ENCODE measurements at regions of chr1 and their contacts with region 1.

Region 1: DNA sequence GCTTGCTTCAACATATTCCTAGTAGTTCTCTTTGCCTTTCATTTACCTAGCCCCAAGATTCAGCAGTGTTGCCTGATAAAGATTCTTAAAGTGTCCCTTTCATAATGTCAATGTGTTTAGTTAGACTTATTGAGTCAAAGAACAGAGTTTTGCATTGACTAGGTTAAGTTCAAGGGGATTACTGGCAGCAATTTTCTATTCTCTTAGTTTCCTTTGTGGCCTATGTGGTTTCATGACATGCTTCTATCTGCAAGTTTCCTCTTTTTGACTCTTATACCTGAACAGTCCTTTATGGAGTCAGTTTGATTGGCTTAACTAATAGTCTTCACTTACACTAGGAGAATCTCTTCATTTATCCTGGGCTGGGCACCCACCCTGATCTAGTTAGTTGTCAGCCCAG is 151.3 kb downstream of the ADGRL4 start:
- ATAC-seq: no peak
- H3K4me3 ChIP-seq: no peak overlapping the region
- H3K27ac ChIP-seq: no peak overlapping the region
- H3K4me1 ChIP-seq: no peaks in the 10 kb centered on the region

Region 2: DNA sequence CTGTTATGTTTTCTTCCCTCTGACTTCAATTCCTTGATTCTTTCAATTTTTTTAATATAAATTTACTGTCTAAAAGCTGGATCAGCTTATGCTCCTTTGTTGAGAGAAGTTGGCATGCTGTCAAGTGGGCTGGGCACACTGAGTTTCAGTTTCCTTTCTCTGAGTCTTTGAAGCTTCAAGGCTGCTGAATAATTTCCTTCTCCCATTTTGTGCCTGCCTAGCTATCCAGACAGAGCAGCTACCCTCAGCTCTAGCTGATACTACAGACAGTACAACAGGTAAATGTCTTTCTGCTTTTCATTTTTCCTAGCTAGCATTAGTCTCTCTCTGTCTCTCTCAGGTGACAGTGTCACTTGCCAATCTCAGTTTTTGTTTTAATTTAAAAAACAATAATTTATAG is 205.6 kb before region 1 on chr1 and contains the start of gene IFI44:
- in situ Hi-C with region 1: no loop called
- ATAC-seq: peak in 6 of 8 experiments; percentile 38 to 95 (median 70)
- H3K4me3 ChIP-seq: no peak within 1 kb of the TSS
- H3K27ac ChIP-seq: no peak within 1 kb of the TSS
- H3K4me1 ChIP-seq: no peaks in the 10 kb centered on the region
- total RNA-seq, gene IFI44: 0.76 to 119 (median 59.8) TPM in 5 of 8 experiments, not detected in the others

Region 3: DNA sequence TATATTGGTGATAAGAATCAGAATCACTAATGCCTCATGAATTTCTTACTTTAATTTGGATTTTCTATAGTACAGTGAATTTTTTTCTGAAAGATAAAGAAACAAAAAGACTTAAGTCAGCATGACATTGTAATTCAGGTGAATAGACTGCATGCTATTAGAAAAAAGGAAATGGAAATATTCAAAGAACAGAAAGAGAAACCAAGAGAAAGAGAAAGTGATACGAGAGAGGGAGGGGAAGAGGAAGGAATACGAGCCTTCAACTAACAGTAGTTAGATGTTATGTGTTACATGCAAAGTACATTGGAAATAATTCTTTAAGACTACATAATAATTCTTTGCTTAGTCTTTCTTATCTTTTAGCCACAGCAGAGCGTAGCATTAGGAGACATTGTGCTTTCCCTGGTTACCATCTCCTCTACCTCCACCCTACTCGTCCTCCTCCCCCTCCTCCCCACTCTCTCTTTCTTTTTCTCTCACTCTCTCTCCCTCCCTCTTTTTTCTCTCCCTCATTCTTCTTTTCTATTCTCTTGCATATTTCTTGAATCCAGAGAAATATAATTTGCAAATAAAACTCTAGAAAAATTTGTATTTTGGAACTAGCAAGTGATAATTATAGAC is 197.7 kb after region 1 on chr1:
- in situ Hi-C with region 1: no loop called
- ATAC-seq: peak in 2 of 8 experiments; percentile 23 to 44
- H3K4me3 ChIP-seq: no peak overlapping the region
- H3K27ac ChIP-seq: no peak overlapping the region
- H3K4me1 ChIP-seq: no peaks in the 10 kb centered on the region

Region 4: DNA sequence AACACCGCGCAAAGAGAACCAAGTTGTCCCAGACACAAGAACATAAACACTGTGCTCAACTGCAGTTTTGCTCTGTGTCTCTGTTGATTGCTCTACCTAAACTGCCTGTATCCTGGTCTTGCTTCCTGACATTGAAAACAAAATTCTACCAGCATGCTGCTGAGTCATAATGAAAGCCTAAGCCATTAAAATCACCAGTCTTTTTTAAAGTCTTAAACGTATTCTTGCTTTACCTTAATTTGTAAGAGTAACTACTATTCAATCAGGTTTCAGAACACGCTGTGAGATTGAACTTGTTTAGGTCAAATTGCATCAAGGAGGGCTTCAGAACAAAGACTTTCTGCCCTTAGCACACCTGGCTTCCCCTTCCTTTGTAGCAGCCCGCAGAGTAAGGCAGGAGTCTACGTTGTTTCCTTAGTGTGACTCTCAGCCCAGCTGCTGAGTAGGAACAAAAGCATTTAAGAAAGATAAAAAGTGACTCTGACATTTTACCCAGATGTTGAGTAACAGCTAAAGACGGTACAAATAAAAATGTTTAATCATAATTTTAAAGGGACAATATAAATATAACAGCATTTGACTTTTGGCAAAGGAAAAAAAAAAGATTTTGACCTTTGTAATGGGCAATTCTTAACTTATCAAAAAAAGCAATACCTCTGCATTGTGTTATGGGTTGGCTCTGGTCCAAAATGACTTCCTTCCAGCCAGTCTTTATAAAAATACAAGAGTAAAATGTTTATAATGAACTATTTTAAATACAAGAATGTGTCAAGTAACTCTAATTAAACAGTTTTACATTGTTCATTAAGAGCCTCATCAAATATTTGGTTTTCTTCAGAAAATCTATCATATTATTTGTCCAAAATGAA is 338.2 kb after region 1 on chr1:
- in situ Hi-C with region 1: loop called in 1 of 9 experiments (anchors 25 kb)
- ATAC-seq: no peak
- H3K4me3 ChIP-seq: no peak overlapping the region
- H3K27ac ChIP-seq: no peak overlapping the region
- H3K4me1 ChIP-seq: no peaks in the 10 kb centered on the region